ENCODE measurements at regions of chr20 and their contacts with region 1.

Region 1: GRCh38 chr20:37356387-37356786 is 10.4 kb downstream of the SRC start:
- DNase-seq: no peak
- H3K4me3 ChIP-seq: no peak overlapping the region
- H3K27ac ChIP-seq: no peak overlapping the region
- H3K4me1 ChIP-seq: peaks cover 0 to 6% (median 0%) of the 10 kb centered on the region in 4 experiments; a peak in 2 of 7 replicates
- H3K27me3 ChIP-seq: no peaks in the 10 kb centered on the region
- CTCF ChIP-seq: no peak
- EP300 ChIP-seq: no peak
- POLR2A ChIP-seq: no peak
- RAD21 ChIP-seq: no peak

Region 2: GRCh38 chr20:37345339-37346230 is 10.8 kb before region 1 on chr20 and contains the start of gene SRC:
- CTCF ChIA-PET with region 1: interaction called, 4 read pairs
- POLR2A ChIA-PET with region 1: interaction called, 16 read pairs
- DNase-seq: peak; percentile 39 to 82
- H3K4me3 ChIP-seq: peak within 1 kb of the TSS; percentile 33 to 67 (median 48)
- H3K27ac ChIP-seq: no peak within 1 kb of the TSS; the same call in 1 of the 2 replicates
- H3K4me1 ChIP-seq: peaks cover 0 to 11% (median 6%) of the 10 kb centered on the region in 4 experiments; a peak in 4 of 7 replicates
- H3K27me3 ChIP-seq: no peaks in the 10 kb centered on the region
- CTCF ChIP-seq: no peak
- EP300 ChIP-seq: no peak
- POLR2A ChIP-seq: peak in 1 of 2 experiments; percentile 73; a peak in 1 of 3 replicates
- RAD21 ChIP-seq: no peak
- total RNA-seq, gene SRC: 28.8 and 29.8 TPM in 2 replicates

Region 3: GRCh38 chr20:37430788-37431460 is 74.5 kb after region 1 on chr20:
- CTCF ChIA-PET with region 1: no interaction called
- POLR2A ChIA-PET with region 1: no interaction called
- DNase-seq: no peak
- H3K4me3 ChIP-seq: no peak overlapping the region
- H3K27ac ChIP-seq: no peak overlapping the region
- H3K4me1 ChIP-seq: no peaks in the 10 kb centered on the region; a peak in 1 of 7 replicates
- H3K27me3 ChIP-seq: no peaks in the 10 kb centered on the region; a peak in 3 of 7 replicates
- CTCF ChIP-seq: no peak
- EP300 ChIP-seq: no peak
- POLR2A ChIP-seq: no peak
- RAD21 ChIP-seq: no peak

Region 4: DNA sequence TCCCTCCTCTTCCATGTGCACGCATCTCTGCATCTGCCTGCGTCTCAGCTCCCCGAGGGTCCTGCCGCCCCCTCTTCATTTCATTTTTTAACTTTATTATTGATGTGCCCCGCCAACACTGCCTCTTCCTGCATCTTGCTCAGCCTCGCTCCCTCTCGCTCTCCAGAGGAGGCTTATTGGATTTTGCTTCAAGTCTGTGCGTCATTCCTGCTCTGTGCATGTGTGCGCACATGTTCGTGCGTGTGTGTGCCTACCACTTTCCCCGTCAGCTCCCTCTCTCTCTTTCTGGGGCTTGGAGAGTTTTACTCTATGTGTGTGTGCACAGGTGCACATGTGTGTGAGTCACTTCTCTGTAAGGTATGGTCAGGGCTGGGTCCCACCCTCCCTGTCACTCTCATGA is 92.9 kb after region 1 on chr20:
- CTCF ChIA-PET with region 1: no interaction called
- POLR2A ChIA-PET with region 1: no interaction called
- DNase-seq: no peak
- H3K4me3 ChIP-seq: no peak overlapping the region
- H3K27ac ChIP-seq: no peak overlapping the region
- H3K4me1 ChIP-seq: no peaks in the 10 kb centered on the region
- H3K27me3 ChIP-seq: peaks cover 0 to 2% (median 0%) of the 10 kb centered on the region in 4 experiments; a peak in 1 of 7 replicates
- CTCF ChIP-seq: no peak
- EP300 ChIP-seq: no peak
- POLR2A ChIP-seq: no peak
- RAD21 ChIP-seq: no peak

Region 5: DNA sequence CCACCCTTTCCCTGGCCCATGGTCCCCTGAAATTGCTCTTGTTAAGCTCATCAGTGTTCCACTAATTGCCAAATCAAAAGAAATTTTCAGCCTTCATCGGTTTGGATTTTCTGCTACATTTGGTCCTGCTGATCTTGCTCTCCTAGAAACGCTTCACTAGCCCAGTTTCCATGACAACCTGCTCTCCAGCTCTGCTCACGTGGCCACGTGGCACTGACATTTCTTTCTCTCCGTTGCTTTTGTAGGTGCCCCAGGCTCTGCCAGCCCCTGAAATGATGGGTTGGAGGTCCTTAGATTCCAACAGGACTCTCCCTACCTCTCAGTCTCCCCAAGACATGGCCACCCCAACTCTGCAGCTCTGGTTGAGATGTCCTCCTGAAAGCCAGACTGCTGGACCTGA is 118.9 kb after region 1 on chr20:
- CTCF ChIA-PET with region 1: no interaction called
- POLR2A ChIA-PET with region 1: no interaction called
- DNase-seq: no peak
- H3K4me3 ChIP-seq: no peak overlapping the region
- H3K27ac ChIP-seq: no peak overlapping the region
- H3K4me1 ChIP-seq: peaks cover 0 to 3% (median 0%) of the 10 kb centered on the region in 4 experiments; a peak in 1 of 7 replicates
- H3K27me3 ChIP-seq: no peaks in the 10 kb centered on the region; a peak in 1 of 7 replicates
- CTCF ChIP-seq: no peak
- EP300 ChIP-seq: no peak
- POLR2A ChIP-seq: no peak
- RAD21 ChIP-seq: no peak